ENCODE measurements at regions of chr12 and their contacts with region 1.

Region 1: GRCh38 chr12:10771132-10771733 is 31.2 kb downstream of the TAS2R7 start:
- DNase-seq: peak in 1 of 2 experiments; percentile 20
- H3K4me3 ChIP-seq: no peak overlapping the region
- H3K4me1 ChIP-seq: no peaks in the 10 kb centered on the region
- H3K27me3 ChIP-seq: peaks cover 49% of the 10 kb centered on the region

Region 2: GRCh38 chr12:11202811-11203210 is 431.6 kb after region 1 on chr12:
- in situ Hi-C with region 1: loop called (anchors 10 kb)
- DNase-seq: no peak
- H3K4me3 ChIP-seq: no peak overlapping the region
- H3K4me1 ChIP-seq: no peaks in the 10 kb centered on the region; the same call in 1 of the 2 replicates
- H3K27me3 ChIP-seq: no peaks in the 10 kb centered on the region

Measured in HAP-1 (cell line).